Dendritic cell treated with granulocyte-macrophage colony-stimulating factor and Interleukin-4, amounts not matched to agents 40 ng/mL and 50 ng/mL, for 4 days (primary cell): ENCODE measurements at regions of chr9 and their contacts with region 1.

Region 1: GRCh38 chr9:91978739-91979414 is 28.8 kb upstream of the ROR2 start:
- H3K4me3 Mint-ChIP-seq: no peak overlapping the region
- H3K27ac Mint-ChIP-seq: no peak overlapping the region
- H3K4me1 Mint-ChIP-seq: no peaks in the 10 kb centered on the region
- H3K27me3 Mint-ChIP-seq: peaks cover 5% of the 10 kb centered on the region

Region 2: GRCh38 chr9:91750343-91750742 is 228.5 kb before region 1 on chr9:
- intact Hi-C with region 1: loop called (anchors 5 kb)
- H3K4me3 Mint-ChIP-seq: no peak overlapping the region
- H3K27ac Mint-ChIP-seq: no peak overlapping the region
- H3K4me1 Mint-ChIP-seq: no peaks in the 10 kb centered on the region
- H3K27me3 Mint-ChIP-seq: peaks cover 12% of the 10 kb centered on the region

Region 3: DNA sequence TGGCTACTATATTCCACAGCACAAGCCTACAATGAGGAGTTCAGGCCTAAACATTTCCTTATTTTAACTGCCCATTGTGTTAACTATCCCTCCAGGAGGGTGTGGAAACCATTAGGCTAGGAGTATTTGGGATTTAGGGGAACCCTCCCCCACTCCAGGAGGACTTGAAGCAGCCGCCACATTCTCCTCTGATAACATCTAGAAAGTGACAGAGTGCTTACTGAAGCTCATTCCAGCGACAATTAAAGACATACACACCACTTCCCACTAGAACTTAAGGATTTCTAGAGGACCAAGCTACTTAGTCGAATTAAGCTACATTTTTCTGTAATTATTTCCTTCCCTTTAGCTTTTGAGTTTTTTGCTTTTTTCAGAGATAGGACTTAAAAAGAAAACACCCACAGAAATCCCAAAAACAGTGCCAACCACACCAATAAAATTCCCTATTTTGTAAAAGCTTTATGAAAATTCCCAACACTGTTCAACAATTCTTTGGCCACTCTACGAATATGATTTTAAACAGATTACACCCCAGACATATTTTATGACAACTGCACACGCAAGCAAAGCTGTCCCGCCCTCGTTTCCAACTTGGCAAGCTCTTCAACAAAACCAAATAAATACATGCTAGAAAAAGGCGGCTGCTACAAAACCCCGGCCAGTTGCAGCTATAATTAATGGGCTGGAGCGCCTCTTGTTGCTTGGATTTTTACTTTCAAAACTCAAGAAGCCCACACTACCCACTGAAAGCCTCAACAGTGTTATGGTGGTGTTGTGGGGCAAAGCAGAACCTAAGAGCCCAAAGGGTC is 33.4 kb before region 1 on chr9:
- intact Hi-C with region 1: no loop called
- H3K4me3 Mint-ChIP-seq: no peak overlapping the region
- H3K27ac Mint-ChIP-seq: no peak overlapping the region
- H3K4me1 Mint-ChIP-seq: peaks cover 4% of the 10 kb centered on the region
- H3K27me3 Mint-ChIP-seq: peaks cover 64% of the 10 kb centered on the region